ENCODE measurements at regions of chr20 and their contacts with region 1.

Region 1: GRCh38 chr20:49846206-49846807 is 33.7 kb downstream of the SLC9A8 start:
- DNase-seq: peak in 3 of 10 donors; percentile 22 to 61 (median 57)
- H3K4me3 ChIP-seq: no peak overlapping the region
- H3K27ac ChIP-seq: peak overlapping the region in 1 of 59 donors; percentile 63
- H3K27me3 ChIP-seq: no peaks in the 10 kb centered on the region
- CTCF ChIP-seq: peak; percentile 49 to 86 (median 73)

Region 2: GRCh38 chr20:49330544-49331239 is 515.6 kb before region 1 on chr20:
- intact Hi-C with region 1: loop called in 1 of 2 experiments (anchors 5 kb)
- DNase-seq: no peak
- H3K4me3 ChIP-seq: no peak overlapping the region
- H3K27ac ChIP-seq: no peak overlapping the region
- H3K27me3 ChIP-seq: no peaks in the 10 kb centered on the region
- CTCF ChIP-seq: no peak

Region 3: DNA sequence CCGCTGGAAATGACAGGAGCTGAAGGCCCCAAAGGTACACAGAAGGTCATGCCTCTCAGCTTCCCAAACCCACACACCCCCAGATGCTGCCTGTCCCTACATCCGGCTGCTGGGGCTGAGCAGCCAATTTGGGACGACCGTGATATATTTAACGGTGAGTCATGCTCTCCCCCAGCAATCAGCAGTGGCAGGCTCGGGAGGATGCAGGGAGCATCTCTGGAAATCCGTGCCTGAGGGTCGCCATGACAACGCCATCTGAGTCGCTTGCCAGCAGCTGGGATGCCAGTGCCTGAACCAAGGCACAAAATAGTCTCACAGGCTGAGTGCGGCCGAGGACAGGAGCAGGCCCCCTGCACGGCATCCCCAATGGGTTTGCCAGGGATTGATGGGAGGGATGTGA is 421.8 kb before region 1 on chr20:
- intact Hi-C with region 1: no loop called
- DNase-seq: peak; percentile 45 to 95 (median 84)
- H3K4me3 ChIP-seq: no peak overlapping the region
- H3K27ac ChIP-seq: peak overlapping the region in 56 of 59 donors; percentile 11 to 94 (median 74)
- H3K27me3 ChIP-seq: peaks cover 0 to 5% (median 0%) of the 10 kb centered on the region in 45 donors
- CTCF ChIP-seq: no peak

Region 4: GRCh38 chr20:49541733-49542513 is 304.4 kb before region 1 on chr20:
- intact Hi-C with region 1: loop called in 1 of 2 experiments (anchors 10 kb)
- DNase-seq: peak in 7 of 10 donors; percentile 8 to 65 (median 54)
- H3K4me3 ChIP-seq: no peak overlapping the region
- H3K27ac ChIP-seq: no peak overlapping the region
- H3K27me3 ChIP-seq: no peaks in the 10 kb centered on the region
- CTCF ChIP-seq: peak; percentile 45 to 82 (median 65)

Region 5: DNA sequence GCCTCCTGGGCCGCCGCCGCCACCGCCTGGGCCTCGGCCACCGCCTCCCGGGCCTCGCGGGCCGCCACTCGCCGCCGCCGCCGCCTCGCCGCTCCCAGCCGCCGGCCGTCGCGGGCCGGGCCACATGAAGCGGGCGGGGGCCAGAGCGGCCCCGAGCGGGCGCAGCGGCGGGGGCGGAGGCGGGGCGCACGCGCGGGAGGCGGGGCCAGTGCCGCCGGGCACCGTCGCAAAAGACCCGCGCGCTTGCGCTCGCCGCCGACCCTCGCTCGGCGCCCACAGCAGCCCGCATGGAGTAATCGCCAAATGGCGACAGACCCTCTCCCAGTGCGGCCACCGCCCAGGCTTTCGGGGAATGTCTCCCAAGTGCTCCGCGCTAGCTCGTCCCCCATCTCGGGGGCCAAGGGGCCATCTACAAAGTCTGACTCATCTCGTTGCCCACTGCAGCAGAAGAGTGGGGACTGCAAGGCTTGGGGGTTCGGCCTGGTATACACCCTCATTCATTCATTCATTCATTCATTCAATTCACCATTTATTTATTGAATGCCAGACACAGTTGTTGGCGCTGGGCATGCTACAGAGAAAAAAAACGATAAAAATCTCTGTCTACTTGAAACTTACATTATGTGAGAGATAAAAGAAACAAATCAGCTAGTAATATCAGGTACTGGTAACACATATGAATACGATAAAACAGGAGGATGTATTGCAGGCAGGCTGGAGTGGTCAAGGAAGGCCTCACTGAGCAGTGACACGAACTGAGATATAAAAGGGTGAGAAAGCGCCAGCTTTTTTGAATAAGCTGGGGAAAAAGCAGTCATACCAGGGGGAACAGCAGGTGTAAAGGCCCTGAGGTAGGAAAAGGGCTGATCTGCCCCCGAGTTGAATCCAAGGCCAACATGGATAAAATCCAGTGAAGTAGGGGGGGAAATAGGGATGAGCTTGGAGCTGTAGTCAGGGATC is 132.3 kb before region 1 on chr20 and contains the start of gene B4GALT5:
- intact Hi-C with region 1: no loop called
- DNase-seq: peak; percentile 55 to 90 (median 81)
- H3K4me3 ChIP-seq: peak within 1 kb of the TSS; percentile 61 to 98 (median 91)
- H3K27ac ChIP-seq: peak within 1 kb of the TSS; percentile 58 to 96 (median 92)
- H3K27me3 ChIP-seq: no peaks in the 10 kb centered on the region
- CTCF ChIP-seq: no peak
- total RNA-seq, gene B4GALT5: 24.2 to 52.0 (median 37.1) TPM

Region 6: GRCh38 chr20:49812463-49813304 is 33.6 kb before region 1 on chr20 and contains the start of gene SLC9A8:
- intact Hi-C with region 1: loop called in 1 of 2 experiments (anchors 5 kb)
- DNase-seq: peak; percentile 77 to 94 (median 92)
- H3K4me3 ChIP-seq: peak within 1 kb of the TSS; percentile 50 to 99 (median 89)
- H3K27ac ChIP-seq: peak within 1 kb of the TSS; percentile 52 to 97 (median 91)
- H3K27me3 ChIP-seq: no peaks in the 10 kb centered on the region
- CTCF ChIP-seq: peak in 54 of 56 donors; percentile 10 to 75 (median 54)
- total RNA-seq, gene SLC9A8: 8.7 to 21.9 (median 14.9) TPM

Region 7: DNA sequence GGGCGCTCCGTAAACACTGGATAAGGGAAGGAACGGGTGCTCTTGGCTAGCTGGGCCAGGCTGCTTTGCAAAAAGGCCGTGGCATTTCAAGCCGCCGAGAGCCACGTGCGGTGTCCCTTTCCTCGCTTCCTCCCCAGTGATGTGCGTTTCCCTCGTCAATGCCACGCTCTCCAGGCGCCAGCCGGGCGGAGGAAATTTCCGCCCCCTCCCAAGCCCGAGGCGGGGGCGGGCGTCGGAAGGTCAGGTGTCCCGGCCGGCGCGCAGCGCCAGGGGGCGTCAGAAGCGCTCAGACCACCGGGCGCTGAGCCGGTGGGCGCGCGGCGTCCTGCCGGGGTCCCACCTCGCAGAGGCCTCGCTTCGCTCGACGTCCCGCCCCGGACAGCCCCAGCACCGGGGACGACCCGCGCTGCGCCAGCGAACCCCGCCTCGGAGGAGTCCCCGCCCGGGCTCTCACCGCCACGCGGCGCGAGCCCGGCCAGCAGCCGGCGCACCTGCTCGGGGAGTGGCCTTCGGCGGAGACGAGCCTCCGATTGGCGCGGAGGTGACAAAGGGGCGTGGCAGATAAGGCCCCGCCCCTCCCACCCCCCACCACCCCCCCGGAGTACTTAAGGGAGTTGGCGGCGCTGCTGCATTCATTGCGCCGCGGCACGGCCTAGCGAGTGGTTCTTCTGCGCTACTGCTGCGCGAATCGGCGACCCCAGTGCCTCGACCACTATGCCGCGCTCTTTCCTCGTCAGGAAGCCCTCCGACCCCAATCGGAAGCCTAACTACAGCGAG is 136.2 kb after region 1 on chr20 and contains the start of gene SNAI1:
- intact Hi-C with region 1: no loop called
- DNase-seq: peak; percentile 66 to 89 (median 80)
- H3K4me3 ChIP-seq: peak within 1 kb of the TSS; percentile 25 to 83 (median 69)
- H3K27ac ChIP-seq: peak within 1 kb of the TSS in 48 of 59 donors; percentile 0 to 91 (median 69)
- H3K27me3 ChIP-seq: no peaks in the 10 kb centered on the region
- CTCF ChIP-seq: peak in 53 of 56 donors; percentile 25 to 83 (median 55)
- total RNA-seq, gene SNAI1: 0.39 to 6.9 (median 1.8) TPM in 119 of 120 experiments, not detected in the other

Measured in dorsolateral prefrontal cortex (tissue), 120 donors.